ENCODE measurements at regions of chr1 and their contacts with region 1.

Region 1: GRCh38 chr1:150979092-150980056 is 2.7 kb upstream of the ANXA9 start:
- DNase-seq: peak; percentile 92
- H3K4me3 Mint-ChIP-seq: peak overlapping the region; percentile 7
- H3K27ac Mint-ChIP-seq: no peak overlapping the region
- H3K4me1 Mint-ChIP-seq: peaks cover 33% of the 10 kb centered on the region
- H3K27me3 Mint-ChIP-seq: no peaks in the 10 kb centered on the region

Region 2: DNA sequence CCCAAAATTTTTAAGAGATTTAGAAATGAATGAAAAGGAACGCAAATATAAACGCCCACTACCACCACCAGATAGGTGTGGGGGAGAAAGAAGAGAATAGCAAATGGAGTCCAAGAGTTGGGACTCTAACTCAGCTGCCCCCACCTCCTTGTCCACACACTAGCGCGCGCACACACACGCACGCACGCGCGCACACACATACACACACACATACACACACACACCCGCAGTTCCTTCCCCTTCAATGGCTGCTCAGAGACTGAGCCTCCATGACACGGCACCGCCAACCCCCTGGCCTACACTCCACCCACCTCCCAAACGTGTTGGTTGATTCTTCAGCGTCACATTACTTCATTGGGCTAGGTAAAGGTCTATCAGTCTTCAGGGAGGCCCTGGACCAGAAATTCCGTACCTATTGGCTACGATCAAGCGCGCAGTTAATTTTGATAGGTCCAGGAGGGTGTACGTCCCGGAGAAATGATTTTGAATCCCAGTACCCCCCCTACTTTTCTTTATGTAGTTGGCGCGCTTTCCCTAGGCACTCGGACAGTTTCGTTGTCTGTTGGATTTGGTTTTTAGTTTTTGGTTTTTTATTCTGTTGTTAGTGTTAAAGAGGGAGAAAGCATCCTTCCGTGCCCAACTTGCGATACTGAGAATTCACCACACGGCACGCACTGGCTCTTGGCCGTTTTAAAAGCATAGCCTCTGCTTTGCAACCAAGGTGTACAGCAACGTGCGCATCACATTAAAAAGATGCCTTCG is 743.3 kb before region 1 on chr1 and contains the start of gene ANP32E:
- CTCF ChIA-PET with region 1: no interaction called
- POLR2A ChIA-PET with region 1: no interaction called
- intact Hi-C with region 1: loop called (anchors 10 kb)
- DNase-seq: peak; percentile 97
- H3K4me3 Mint-ChIP-seq: no peak within 1 kb of the TSS
- H3K27ac Mint-ChIP-seq: no peak within 1 kb of the TSS
- H3K4me1 Mint-ChIP-seq: peaks cover 17% of the 10 kb centered on the region
- H3K27me3 Mint-ChIP-seq: no peaks in the 10 kb centered on the region
- total RNA-seq, gene ANP32E: 224 to 228 TPM

Region 3: GRCh38 chr1:150486964-150487762 is 492.2 kb before region 1 on chr1 and contains the start of gene TARS2:
- CTCF ChIA-PET with region 1: no interaction called
- POLR2A ChIA-PET with region 1: no interaction called
- intact Hi-C with region 1: loop called (anchors 10 kb)
- DNase-seq: peak; percentile 98
- H3K4me3 Mint-ChIP-seq: peak within 1 kb of the TSS; percentile 83
- H3K27ac Mint-ChIP-seq: peak within 1 kb of the TSS; percentile 90
- H3K4me1 Mint-ChIP-seq: peaks cover 21% of the 10 kb centered on the region
- H3K27me3 Mint-ChIP-seq: no peaks in the 10 kb centered on the region
- total RNA-seq, gene TARS2: 46.3 to 51.7 TPM

Region 4: DNA sequence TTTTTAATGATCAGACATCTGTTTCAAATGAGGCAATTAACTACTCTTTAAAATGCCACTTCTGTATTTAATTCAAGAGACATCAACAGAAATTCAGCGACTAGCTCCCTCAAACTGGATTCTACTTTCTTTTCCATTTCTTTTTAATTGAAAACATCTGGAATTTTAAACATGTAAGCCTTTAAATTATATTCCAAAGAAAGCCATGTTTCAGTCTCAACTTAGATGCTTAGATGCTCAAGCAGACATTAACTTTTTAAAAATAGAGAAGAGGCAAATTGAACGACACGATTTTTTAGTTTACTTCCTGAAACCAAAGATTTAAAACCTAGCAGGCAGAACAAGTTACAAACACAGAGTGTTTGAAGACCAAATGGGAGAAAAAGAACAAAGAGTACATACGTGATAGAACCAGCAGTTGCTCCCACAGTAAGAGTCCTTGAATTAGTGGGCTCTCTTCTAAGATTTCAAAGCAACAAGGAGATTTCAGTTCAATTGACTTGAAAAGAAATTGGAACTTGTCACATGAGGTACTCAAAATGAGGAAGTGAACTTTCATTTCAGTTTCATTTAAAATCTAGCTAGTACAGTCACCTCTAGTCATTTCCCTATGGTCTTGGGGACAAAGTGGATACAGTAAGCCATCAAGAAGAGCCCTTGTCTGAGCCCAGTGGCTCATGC is 213.9 kb before region 1 on chr1 and contains the start of gene CTSS:
- CTCF ChIA-PET with region 1: no interaction called
- POLR2A ChIA-PET with region 1: no interaction called
- intact Hi-C with region 1: loop called (anchors 5 kb)
- DNase-seq: no peak
- H3K4me3 Mint-ChIP-seq: peak within 1 kb of the TSS; percentile 88
- H3K27ac Mint-ChIP-seq: peak within 1 kb of the TSS; percentile 88
- H3K4me1 Mint-ChIP-seq: peaks cover 45% of the 10 kb centered on the region
- H3K27me3 Mint-ChIP-seq: no peaks in the 10 kb centered on the region
- total RNA-seq, gene CTSS: 39.4 to 45.5 TPM

Region 5: DNA sequence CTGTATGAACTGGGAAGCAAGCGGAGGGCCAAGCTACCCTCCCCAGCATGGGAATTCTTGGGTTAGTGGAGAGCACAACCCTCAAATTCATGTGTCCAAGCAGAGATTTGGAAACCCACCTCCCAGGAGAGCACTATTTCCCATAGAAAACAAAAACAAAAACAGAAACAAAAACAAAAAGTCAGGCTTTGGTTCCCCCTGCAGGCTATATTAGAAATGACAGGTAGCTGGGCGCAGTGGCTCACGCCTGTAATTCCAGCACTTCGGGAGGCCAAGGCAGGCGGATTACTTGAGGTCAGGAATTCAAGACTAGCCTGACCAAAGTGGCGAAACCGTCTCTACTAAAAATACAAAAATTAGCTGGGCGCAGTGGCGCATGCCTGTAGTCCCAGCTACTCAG is 16.5 kb after region 1 on chr1:
- CTCF ChIA-PET with region 1: interaction called, 222 read pairs
- POLR2A ChIA-PET with region 1: interaction called, 3 read pairs
- intact Hi-C with region 1: loop called (anchors 2 kb)
- DNase-seq: peak; percentile 41
- H3K4me3 Mint-ChIP-seq: no peak overlapping the region
- H3K27ac Mint-ChIP-seq: no peak overlapping the region
- H3K4me1 Mint-ChIP-seq: peaks cover 18% of the 10 kb centered on the region
- H3K27me3 Mint-ChIP-seq: no peaks in the 10 kb centered on the region

Region 6: DNA sequence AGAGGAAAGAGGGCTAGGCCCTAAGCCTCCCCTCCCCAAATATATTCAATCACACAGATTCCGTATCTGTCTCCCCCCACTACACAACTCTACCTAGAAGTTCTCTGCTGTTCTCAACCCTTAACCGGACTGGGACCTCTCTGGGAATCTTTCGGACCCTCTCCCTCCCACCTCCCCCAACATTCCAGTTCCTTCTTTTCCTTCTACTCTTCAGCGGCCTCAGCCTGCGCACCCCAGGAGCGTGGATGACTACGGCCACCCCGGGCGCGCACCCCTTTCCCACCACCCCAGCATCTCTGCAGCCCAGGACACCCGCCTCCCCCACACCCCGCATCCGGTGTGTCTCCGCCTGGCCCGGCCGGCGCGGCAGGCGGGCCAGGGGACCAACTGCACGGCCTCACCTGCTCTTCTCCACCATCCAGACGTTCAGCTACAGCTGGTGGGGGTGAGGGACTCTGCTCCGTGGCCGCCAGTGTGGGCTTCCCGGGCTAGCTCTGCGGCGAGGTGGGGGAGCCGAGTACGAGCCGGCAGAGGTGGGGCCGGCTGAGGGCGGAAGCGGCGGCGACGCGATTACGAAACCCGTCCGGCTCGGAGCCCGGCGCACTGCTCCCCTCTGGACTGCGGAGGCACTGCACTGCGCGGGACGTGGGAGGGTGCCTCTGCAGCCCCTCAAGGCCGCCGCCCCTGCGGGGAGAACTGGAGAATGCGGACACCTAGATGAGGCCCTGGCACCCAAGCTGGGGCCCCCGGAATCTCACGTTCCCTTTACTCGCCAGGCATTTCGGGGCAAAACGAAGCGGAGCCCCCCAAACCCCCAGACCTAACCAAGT is 79.9 kb after region 1 on chr1 and contains the start of gene CDC42SE1:
- CTCF ChIA-PET with region 1: no interaction called
- POLR2A ChIA-PET with region 1: interaction called, 3 read pairs
- intact Hi-C with region 1: loop called (anchors 2 kb)
- DNase-seq: peak; percentile 89
- H3K4me3 Mint-ChIP-seq: peak within 1 kb of the TSS; percentile 98
- H3K27ac Mint-ChIP-seq: peak within 1 kb of the TSS; percentile 99
- H3K4me1 Mint-ChIP-seq: peaks cover 56% of the 10 kb centered on the region
- H3K27me3 Mint-ChIP-seq: no peaks in the 10 kb centered on the region
- total RNA-seq, gene CDC42SE1: 135 to 136 TPM

Measured in activated CD4-positive, alpha-beta memory T cell treated with anti-CD3 and anti-CD28 coated beads for 36 hours (primary cell).